Posterior cingulate gyrus (tissue), 11 donors: ENCODE measurements at regions of chr12 and their contacts with region 1.

Region 1: GRCh38 chr12:70576346-70577282 is 60.6 kb downstream of the PTPRB start:
- DNase-seq: no peak

Region 2: GRCh38 chr12:69879041-69879960 is 697.3 kb before region 1 on chr12:
- intact Hi-C with region 1: loop called (anchors 1 kb)
- DNase-seq: peak; percentile 43 to 95 (median 80)

Region 3: DNA sequence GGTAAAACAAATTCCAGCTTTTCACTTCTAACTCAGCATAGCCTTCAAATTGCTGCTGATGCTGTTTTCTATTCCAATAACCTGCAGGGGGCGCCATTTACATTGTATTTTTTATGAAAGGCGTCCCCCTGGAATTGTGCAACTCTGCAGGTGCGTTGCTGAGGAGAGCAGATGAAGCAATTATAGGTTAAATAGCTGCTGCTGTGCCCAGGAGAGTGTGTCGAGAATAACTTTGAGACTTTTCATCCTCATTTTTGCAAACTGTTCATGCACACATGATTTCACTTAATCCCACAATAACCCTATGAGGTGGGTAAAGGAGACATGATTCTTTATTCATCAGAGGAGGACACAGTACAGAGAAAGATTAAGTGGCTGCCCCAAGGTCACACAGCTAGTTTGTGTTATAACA is 675.9 kb before region 1 on chr12:
- intact Hi-C with region 1: loop called (anchors 1 kb)
- DNase-seq: peak in 6 of 10 donors; percentile 57 to 93 (median 72)

Region 4: GRCh38 chr12:70178038-70178437 is 398.6 kb before region 1 on chr12:
- intact Hi-C with region 1: loop called (anchors 10 kb)
- DNase-seq: no peak

Region 5: DNA sequence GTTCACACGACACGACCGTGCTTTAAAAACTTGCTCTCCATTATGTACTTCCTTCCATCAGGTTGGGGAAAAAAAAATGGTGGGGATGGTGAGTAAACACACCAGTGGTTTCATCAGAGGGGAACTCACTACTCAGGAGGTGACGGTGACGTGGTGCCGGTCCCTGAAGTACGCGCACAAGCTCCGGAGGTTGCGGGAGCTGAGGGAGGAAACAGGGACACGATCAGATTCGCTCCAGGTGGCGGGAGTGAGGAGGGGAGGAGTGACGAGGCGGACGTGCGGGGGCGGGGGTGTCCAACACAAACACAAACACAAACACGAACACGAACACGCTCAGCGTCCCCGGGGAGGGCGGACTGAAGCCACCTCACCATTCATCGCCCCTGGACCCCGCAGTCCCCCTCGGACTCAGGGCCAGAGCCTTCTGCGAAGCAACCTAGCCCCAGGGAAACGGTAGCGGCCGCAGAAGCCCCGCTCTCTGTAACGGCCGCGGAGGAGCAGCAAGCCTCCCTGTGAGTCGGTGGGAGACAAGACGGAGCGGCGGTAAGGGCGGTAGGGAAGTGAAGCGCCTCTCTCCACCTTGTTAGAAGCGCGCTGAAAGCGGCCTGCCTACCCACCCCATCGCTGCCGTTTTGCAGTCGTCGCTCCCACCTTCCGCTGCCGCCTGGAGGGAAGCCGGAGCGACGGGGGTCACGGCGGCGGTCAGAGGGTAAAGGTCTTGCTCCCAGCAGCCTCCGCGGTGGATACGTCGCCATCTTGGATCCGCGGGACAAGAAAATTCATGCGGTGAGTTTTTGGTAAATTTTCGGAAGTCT is 333.7 kb before region 1 on chr12 and contains the start of gene CNOT2:
- intact Hi-C with region 1: loop called (anchors 1 kb)
- DNase-seq: peak; percentile 84 to 98 (median 88)

Region 6: DNA sequence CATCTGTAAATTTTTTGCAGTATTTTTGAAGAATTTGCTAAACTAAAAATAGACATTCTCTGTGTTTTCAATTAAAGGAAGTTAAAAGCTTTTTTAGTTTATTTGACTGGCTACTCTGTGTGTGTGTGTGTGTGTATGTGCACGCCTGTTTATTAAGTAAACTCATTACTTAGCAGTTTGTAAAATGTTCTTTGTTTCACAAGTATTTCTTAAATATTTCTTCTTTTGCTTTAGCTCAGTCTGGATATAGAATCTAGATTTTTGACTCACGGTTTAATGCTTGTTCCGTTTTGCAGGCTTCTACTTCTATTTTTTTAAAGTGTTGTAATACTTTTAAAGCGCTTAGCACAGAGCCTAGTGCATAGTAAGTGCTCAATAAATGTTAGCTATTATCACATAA is 257.0 kb before region 1 on chr12:
- intact Hi-C with region 1: no loop called
- DNase-seq: no peak

Region 7: GRCh38 chr12:70365648-70366518 is 210.7 kb before region 1 on chr12 and contains the start of gene KCNMB4:
- intact Hi-C with region 1: loop called (anchors 2 kb)
- DNase-seq: peak; percentile 32 to 98 (median 78)

Region 8: GRCh38 chr12:70402600-70402999 is 174.0 kb before region 1 on chr12:
- intact Hi-C with region 1: loop called (anchors 10 kb)
- DNase-seq: no peak